Dorsolateral prefrontal cortex (tissue), 120 donors: ENCODE measurements at regions of chr6 and their contacts with region 1.

Region 1: GRCh38 chr6:117602151-117602898 is at the start of gene GOPC:
- DNase-seq: peak; percentile 91 to 97 (median 96)
- H3K4me3 ChIP-seq: peak within 1 kb of the TSS; percentile 77 to 100 (median 95)
- H3K27ac ChIP-seq: peak within 1 kb of the TSS; percentile 58 to 99 (median 95)
- H3K27me3 ChIP-seq: no peaks in the 10 kb centered on the region
- CTCF ChIP-seq: peak in 36 of 56 donors; percentile 4 to 61 (median 23)
- total RNA-seq, gene GOPC: 15.4 to 48.0 (median 36.0) TPM

Region 2: DNA sequence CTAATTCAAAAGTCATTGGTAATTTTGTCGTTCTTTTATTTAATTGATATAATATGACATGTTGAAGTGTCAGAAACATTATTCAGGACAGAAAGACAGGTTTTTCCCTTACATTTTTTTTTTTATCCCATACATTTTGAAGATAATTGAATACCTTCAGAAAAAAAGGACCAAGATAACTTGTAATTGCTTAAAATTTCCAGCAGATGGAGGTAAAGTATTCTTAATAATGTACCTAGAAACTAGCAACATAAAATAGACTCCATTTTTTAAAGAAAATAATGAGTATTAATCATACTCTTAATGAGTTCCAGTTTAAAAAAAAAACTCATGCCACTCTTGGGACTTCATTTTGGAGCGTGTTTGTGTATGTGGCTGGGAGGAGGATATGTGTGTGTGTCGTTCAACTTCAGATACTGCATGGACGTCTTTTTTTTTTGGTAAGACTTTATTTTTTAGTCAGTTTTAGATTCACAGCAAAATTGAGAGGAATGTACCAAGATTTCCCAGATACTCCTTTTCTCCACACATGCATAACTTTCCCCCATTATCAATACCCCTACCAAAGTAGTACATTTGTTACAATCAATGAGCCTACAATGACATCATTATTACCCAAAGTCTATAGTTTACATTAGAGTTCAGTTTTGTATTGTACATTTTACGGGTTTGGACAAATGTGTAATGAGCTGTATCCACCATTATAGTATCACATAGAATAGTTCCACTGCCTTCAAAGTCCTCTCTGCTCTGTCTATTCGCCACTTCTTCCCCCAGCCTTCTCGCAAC is 256.0 kb before region 1 on chr6:
- intact Hi-C with region 1: loop called (anchors 2 to 5 kb)
- DNase-seq: no peak
- H3K4me3 ChIP-seq: peak overlapping the region in 42 of 59 donors; percentile 8 to 54 (median 34)
- H3K27ac ChIP-seq: no peak overlapping the region
- H3K27me3 ChIP-seq: no peaks in the 10 kb centered on the region
- CTCF ChIP-seq: peak; percentile 44 to 81 (median 66)

Region 3: GRCh38 chr6:117482240-117483003 is 119.9 kb before region 1 on chr6 and contains the start of gene DCBLD1:
- intact Hi-C with region 1: loop called in 1 of 2 experiments (anchors 2 kb)
- DNase-seq: peak in 9 of 10 donors; percentile 30 to 76 (median 43)
- H3K4me3 ChIP-seq: peak within 1 kb of the TSS; percentile 49 to 91 (median 76)
- H3K27ac ChIP-seq: peak within 1 kb of the TSS in 53 of 59 donors; percentile 7 to 90 (median 58)
- H3K27me3 ChIP-seq: no peaks in the 10 kb centered on the region
- CTCF ChIP-seq: peak in 13 of 56 donors; percentile 2 to 52 (median 18)
- total RNA-seq, gene DCBLD1: 7.0 to 20.0 (median 12.1) TPM

Region 4: GRCh38 chr6:117555882-117556498 is 46.3 kb before region 1 on chr6:
- intact Hi-C with region 1: loop called (anchors 5 kb)
- DNase-seq: peak in 3 of 10 donors; percentile 36 to 55 (median 51)
- H3K4me3 ChIP-seq: peak overlapping the region in 2 of 59 donors; percentile 4 to 13
- H3K27ac ChIP-seq: no peak overlapping the region
- H3K27me3 ChIP-seq: no peaks in the 10 kb centered on the region
- CTCF ChIP-seq: peak; percentile 82 to 99 (median 92)

Region 5: GRCh38 chr6:117870486-117871242 is 268.3 kb after region 1 on chr6:
- intact Hi-C with region 1: no loop called
- DNase-seq: no peak
- H3K4me3 ChIP-seq: no peak overlapping the region
- H3K27ac ChIP-seq: no peak overlapping the region
- H3K27me3 ChIP-seq: peaks cover 0 to 3% (median 0%) of the 10 kb centered on the region in 45 donors
- CTCF ChIP-seq: no peak

Region 6: GRCh38 chr6:118893807-118894424 is 1291.6 kb after region 1 on chr6 and contains the start of gene ASF1A:
- intact Hi-C with region 1: loop called in 1 of 2 experiments (anchors 10 kb)
- DNase-seq: peak; percentile 85 to 97 (median 97)
- H3K4me3 ChIP-seq: peak within 1 kb of the TSS; percentile 59 to 96 (median 86)
- H3K27ac ChIP-seq: peak within 1 kb of the TSS; percentile 75 to 99 (median 95)
- H3K27me3 ChIP-seq: no peaks in the 10 kb centered on the region
- CTCF ChIP-seq: peak; percentile 37 to 88 (median 62)
- total RNA-seq, gene ASF1A: 14.8 to 32.4 (median 23.9) TPM